ENCODE measurements at regions of chr7 and their contacts with region 1.

Region 1: DNA sequence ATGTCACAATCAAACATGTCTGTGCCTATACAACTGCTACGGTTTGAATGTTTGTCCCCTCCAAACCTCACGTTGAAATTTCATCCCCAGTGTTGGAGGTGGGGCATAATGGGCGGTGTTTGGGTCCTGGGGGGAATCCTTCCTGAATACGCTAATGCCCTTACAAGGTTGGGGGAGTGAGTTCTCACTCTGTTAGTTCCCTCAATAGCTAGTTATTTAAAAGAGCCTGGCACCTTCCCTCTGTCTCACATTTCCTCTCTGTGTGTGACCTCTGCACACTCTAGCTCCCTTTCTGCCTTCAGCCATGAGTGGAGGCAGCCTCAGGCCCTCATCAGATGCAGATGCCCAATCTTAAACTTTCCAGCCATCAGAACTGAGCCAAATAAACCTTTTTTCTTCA is 129.5 kb downstream of the GRM8 start:
- DNase-seq: no peak

Region 2: DNA sequence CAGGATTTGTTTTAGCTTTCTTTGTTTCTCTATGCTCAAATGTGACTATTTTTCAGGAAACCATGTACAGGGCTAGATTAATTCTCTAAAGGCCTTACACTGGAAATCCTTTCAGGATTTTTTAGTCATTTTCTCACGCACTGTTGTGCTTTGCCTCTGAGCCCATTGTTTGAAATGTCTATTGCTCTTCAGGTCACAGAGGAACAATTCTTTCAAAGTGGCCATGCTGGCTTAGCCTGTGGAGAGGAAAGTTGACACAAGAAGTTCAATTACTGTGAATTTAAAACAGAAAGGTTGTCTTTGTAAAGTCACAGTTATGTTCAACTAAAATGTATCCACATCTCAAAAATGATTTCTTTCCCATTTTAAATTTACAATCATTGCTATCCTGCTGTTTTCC is 1121.9 kb before region 1 on chr7:
- intact Hi-C with region 1: loop called in 1 of 2 experiments (anchors 5 kb)
- DNase-seq: no peak

Region 3: DNA sequence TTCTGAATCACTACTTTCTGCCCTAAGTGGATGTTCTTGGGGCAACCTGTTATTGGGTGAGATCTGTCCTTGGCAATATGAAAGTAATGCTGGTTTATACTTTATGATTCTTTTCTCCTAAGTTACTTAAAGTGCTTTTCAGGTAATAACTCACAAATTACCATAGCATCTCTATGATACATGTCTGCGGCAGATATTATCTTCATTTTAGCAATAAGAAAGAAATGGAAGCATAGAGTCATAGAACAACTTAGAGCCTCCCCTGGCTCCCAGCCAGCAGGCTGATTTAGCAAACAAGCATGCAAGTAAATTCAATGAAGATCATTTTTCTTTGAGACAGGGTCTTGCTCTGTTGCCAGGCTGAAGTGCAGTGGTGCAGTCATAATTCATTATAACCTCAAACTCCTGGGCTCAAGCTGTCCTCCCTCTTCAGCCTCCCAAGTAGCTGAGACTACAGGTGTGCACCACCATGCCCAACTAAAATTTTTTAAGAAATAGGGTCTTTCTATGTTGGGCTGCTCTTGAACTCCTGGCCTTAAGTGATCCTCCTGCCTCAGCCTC is 167.7 kb after region 1 on chr7:
- intact Hi-C with region 1: no loop called
- DNase-seq: no peak

Region 4: GRCh38 chr7:128104035-128104742 is 981.0 kb after region 1 on chr7:
- intact Hi-C with region 1: no loop called
- DNase-seq: peak; percentile 79

Measured in posterior vena cava (tissue), 2 donors.